ENCODE measurements at regions of chr11 and their contacts with region 1.

Region 1: GRCh38 chr11:63614136-63614664 is at the start of gene PLAAT3:
- DNase-seq: peak; percentile 30 to 92
- H3K4me3 ChIP-seq: peak within 1 kb of the TSS; percentile 66 to 70
- H3K27ac ChIP-seq: peak within 1 kb of the TSS; percentile 76 to 80
- H3K4me1 ChIP-seq: peaks cover 0 to 24% of the 10 kb centered on the region in 2 donors
- H3K27me3 ChIP-seq: no peaks in the 10 kb centered on the region
- CTCF ChIP-seq: no peak
- total RNA-seq, gene PLAAT3: 21.1 TPM

Region 2: DNA sequence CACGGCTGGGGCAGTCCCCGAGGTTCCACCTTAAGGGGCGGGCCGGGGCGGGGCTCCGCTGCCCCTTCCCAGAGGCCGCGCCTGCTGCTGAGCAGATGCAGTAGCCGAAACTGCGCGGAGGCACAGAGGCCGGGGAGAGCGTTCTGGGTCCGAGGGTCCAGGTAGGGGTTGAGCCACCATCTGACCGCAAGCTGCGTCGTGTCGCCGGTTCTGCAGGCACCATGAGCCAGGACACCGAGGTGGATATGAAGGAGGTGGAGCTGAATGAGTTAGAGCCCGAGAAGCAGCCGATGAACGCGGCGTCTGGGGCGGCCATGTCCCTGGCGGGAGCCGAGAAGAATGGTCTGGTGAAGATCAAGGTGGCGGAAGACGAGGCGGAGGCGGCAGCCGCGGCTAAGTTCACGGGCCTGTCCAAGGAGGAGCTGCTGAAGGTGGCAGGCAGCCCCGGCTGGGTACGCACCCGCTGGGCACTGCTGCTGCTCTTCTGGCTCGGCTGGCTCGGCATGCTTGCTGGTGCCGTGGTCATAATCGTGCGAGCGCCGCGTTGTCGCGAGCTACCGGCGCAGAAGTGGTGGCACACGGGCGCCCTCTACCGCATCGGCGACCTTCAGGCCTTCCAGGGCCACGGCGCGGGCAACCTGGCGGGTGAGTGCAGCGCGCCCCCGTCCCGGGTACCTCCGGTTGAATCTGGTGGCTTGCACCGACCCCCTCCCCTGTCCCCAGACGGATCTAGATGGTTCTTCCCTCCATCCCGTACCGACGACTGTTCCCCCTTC is 733.2 kb before region 1 on chr11 and contains the start of gene SLC3A2:
- intact Hi-C with region 1: loop called (anchors 10 kb)
- DNase-seq: peak; percentile 70 to 94
- H3K4me3 ChIP-seq: peak within 1 kb of the TSS; percentile 56 to 95
- H3K27ac ChIP-seq: peak within 1 kb of the TSS; percentile 91 to 98
- H3K4me1 ChIP-seq: peaks cover 17 to 44% of the 10 kb centered on the region in 2 donors
- H3K27me3 ChIP-seq: no peaks in the 10 kb centered on the region
- CTCF ChIP-seq: peak; percentile 64 to 89 (median 85)
- total RNA-seq, gene SLC3A2: 143 TPM

Region 3: GRCh38 chr11:63536669-63537292 is 77.4 kb before region 1 on chr11 and contains the start of gene PLAAT4:
- intact Hi-C with region 1: loop called (anchors 2 kb)
- DNase-seq: peak in 1 of 2 donors; percentile 65
- H3K4me3 ChIP-seq: peak within 1 kb of the TSS; percentile 52 to 64
- H3K27ac ChIP-seq: peak within 1 kb of the TSS; percentile 84 to 94
- H3K4me1 ChIP-seq: peaks cover 7 to 19% of the 10 kb centered on the region in 2 donors
- H3K27me3 ChIP-seq: no peaks in the 10 kb centered on the region
- CTCF ChIP-seq: no peak
- total RNA-seq, gene PLAAT4: 1.1 TPM

Region 4: DNA sequence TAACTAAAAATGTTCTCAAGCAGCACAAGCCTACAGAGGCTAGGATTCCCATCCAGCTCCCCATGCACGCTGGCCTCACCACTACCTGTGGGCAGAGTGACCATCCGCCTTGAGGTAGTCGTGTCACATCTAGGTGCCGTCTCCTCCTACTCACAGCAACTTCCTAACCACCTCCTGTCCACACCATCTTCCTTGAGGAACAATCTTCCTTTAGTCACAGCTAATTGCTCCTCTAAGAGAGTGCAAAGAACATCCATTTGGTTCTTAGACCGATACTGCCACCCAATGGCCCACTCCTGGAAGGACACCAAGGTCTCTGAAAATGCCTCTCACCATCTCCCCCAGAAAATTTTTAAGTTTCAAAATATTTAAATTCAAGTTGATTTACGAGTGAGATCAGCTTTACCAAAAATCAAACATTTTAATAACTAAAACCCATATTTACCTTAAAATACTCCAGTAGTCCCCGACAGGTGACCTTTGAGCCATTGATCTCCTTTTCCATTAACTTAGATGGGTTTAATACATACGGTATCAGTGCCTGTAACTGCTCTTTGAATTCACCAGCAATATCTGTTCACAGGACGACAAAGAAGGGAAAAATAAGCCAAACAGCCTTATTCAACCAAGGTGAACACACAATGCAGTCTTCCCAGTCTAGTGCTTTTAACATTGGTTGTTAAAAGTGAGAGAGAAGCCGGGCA is 21.7 kb after region 1 on chr11:
- intact Hi-C with region 1: loop called (anchors 2 kb)
- DNase-seq: no peak
- H3K4me3 ChIP-seq: no peak overlapping the region
- H3K27ac ChIP-seq: no peak overlapping the region
- H3K4me1 ChIP-seq: no peaks in the 10 kb centered on the region
- H3K27me3 ChIP-seq: no peaks in the 10 kb centered on the region
- CTCF ChIP-seq: peak; percentile 54 to 74 (median 60)

Region 5: GRCh38 chr11:63671322-63672155 is 57.3 kb after region 1 on chr11 and contains the start of gene ATL3:
- intact Hi-C with region 1: loop called (anchors 5 kb)
- DNase-seq: peak; percentile 89 to 99
- H3K4me3 ChIP-seq: peak within 1 kb of the TSS; percentile 93 to 95
- H3K27ac ChIP-seq: peak within 1 kb of the TSS; percentile 100
- H3K4me1 ChIP-seq: peaks cover 13 to 36% of the 10 kb centered on the region in 2 donors
- H3K27me3 ChIP-seq: no peaks in the 10 kb centered on the region
- CTCF ChIP-seq: peak in 1 of 3 experiments; percentile 20
- total RNA-seq, gene ATL3: 77.3 TPM

Region 6: GRCh38 chr11:64225612-64226506 is 611.7 kb after region 1 on chr11 and contains the starts of genes NUDT22 and TRPT1:
- intact Hi-C with region 1: no loop called
- DNase-seq: peak; percentile 61 to 96
- H3K4me3 ChIP-seq: peak within 1 kb of the TSS; percentile 61 to 77
- H3K27ac ChIP-seq: peak within 1 kb of the TSS; percentile 88 to 89
- H3K4me1 ChIP-seq: peaks cover 7 to 32% of the 10 kb centered on the region in 2 donors
- H3K27me3 ChIP-seq: no peaks in the 10 kb centered on the region
- CTCF ChIP-seq: peak in 2 of 3 experiments; percentile 11 to 15
- total RNA-seq, gene NUDT22: 158 TPM
- total RNA-seq, gene TRPT1: 224 TPM